Activated CD4-positive, alpha-beta memory T cell treated with anti-CD3 and anti-CD28 coated beads for 36 hours (primary cell): ENCODE measurements at regions of chr3 and their contacts with region 1.

Region 1: DNA sequence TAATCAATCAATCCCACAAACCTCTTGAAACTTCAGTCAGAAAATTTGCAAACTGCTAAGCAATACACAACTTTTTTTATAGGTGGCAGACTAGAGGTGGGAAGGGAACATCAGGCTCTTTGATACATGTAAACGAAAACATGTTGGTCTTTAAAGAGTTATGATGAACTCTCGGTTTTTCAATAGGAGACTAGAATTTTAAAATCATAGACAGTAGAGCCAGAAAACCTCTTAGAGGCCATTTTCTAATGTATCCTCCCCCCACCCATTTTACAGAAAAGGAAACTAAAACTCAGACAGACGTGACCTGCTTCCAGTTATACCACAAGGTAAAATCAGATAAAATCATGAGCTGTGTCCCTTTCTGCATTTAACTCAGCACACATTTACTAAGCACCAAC is 179.1 kb upstream of the LPP start:
- DNase-seq: no peak
- H3K4me3 Mint-ChIP-seq: peak overlapping the region; percentile 62
- H3K27ac Mint-ChIP-seq: peak overlapping the region; percentile 92
- H3K4me1 Mint-ChIP-seq: peaks cover 63% of the 10 kb centered on the region
- H3K27me3 Mint-ChIP-seq: no peaks in the 10 kb centered on the region

Region 2: DNA sequence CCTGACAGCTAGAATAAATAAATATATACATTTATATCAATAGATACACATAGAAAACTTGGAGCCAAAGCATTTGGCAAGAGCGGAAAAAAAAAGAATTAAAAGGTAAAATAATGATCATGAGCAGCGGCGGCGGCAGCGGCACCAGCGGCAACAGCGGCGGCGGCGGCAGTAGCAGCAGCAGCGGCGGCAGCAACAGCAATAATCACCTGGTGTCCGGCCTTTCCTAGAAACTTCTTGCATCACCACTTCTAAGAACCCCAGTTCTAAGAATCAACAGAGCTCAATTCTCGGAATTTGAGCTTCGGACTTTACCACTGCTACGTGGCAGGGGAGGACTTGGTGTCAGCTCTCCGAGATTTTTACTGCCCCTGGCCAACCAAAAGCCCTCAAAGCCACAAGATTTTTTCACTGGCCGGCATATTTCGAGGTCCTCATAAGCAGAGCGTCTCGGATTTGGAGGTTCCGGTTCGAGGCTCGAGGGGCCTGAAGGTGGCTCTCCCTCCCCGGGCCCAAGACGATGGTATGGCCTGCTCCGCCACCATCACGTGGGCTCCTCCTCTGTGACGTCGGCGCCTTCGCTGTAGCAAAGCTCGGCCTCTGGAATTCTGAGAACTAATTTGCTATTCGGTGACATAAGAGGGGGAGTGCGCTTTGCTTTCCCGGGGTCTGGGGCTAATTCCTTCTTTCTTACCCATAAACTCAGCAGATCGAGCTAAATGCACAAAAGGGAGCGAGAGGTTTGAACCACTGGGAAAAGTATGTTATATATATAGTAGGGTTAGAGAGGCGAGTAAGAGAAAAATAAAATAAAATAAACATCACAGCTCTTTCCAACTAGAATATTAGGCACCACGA is 229.4 kb before region 1 on chr3 and contains the start of gene BCL6:
- CTCF ChIA-PET with region 1: interaction called, 34 read pairs
- POLR2A ChIA-PET with region 1: interaction called, 47 read pairs
- intact Hi-C with region 1: loop called (anchors 1 kb)
- DNase-seq: peak; percentile 91
- H3K4me3 Mint-ChIP-seq: peak within 1 kb of the TSS; percentile 90
- H3K27ac Mint-ChIP-seq: peak within 1 kb of the TSS; percentile 99
- H3K4me1 Mint-ChIP-seq: peaks cover 47% of the 10 kb centered on the region
- H3K27me3 Mint-ChIP-seq: no peaks in the 10 kb centered on the region
- total RNA-seq, gene BCL6: 41.4 to 51.3 TPM

Region 3: GRCh38 chr3:187963677-187964385 is 11.0 kb before region 1 on chr3:
- CTCF ChIA-PET with region 1: interaction called, 5 read pairs
- POLR2A ChIA-PET with region 1: interaction called, 7 read pairs
- intact Hi-C with region 1: loop called (anchors 1 kb)
- DNase-seq: no peak
- H3K4me3 Mint-ChIP-seq: no peak overlapping the region
- H3K27ac Mint-ChIP-seq: peak overlapping the region; percentile 0
- H3K4me1 Mint-ChIP-seq: peaks cover 9% of the 10 kb centered on the region
- H3K27me3 Mint-ChIP-seq: no peaks in the 10 kb centered on the region

Region 4: GRCh38 chr3:188061133-188061532 is 86.3 kb after region 1 on chr3:
- CTCF ChIA-PET with region 1: interaction called, 3 read pairs
- POLR2A ChIA-PET with region 1: interaction called, 4 read pairs
- intact Hi-C with region 1: loop called (anchors 1 kb)
- DNase-seq: peak; percentile 81
- H3K4me3 Mint-ChIP-seq: peak overlapping the region; percentile 44
- H3K27ac Mint-ChIP-seq: peak overlapping the region; percentile 80
- H3K4me1 Mint-ChIP-seq: peaks cover 35% of the 10 kb centered on the region
- H3K27me3 Mint-ChIP-seq: no peaks in the 10 kb centered on the region

Region 5: DNA sequence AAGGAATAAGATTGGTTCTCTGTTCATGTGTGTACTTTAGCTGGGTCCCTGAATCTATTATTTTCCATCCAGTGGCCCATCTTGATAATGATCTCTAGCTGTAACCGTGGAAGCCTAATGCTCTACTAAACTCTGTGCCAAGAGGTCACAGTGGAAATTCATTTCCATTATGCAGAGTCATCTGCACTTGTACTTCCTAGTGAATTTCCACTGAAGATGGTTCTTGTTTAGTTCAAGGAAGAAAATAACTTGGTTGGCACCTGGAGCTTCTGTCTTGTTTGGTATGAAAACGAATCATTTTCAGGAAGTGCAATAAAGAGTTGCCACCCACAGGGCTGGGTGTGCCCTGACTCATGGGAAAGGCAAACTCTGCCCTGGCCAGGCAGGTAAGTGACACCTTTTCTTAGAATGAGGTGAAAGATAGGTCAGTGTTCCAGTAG is 189.4 kb after region 1 on chr3:
- CTCF ChIA-PET with region 1: interaction called, 4 read pairs
- POLR2A ChIA-PET with region 1: no interaction called
- intact Hi-C with region 1: loop called (anchors 2 kb)
- DNase-seq: peak; percentile 59
- H3K4me3 Mint-ChIP-seq: no peak overlapping the region
- H3K27ac Mint-ChIP-seq: peak overlapping the region; percentile 76
- H3K4me1 Mint-ChIP-seq: peaks cover 62% of the 10 kb centered on the region
- H3K27me3 Mint-ChIP-seq: no peaks in the 10 kb centered on the region

Region 6: GRCh38 chr3:188320757-188321156 is 345.9 kb after region 1 on chr3:
- CTCF ChIA-PET with region 1: no interaction called
- POLR2A ChIA-PET with region 1: no interaction called
- intact Hi-C with region 1: loop called (anchors 5 kb)
- DNase-seq: no peak
- H3K4me3 Mint-ChIP-seq: no peak overlapping the region
- H3K27ac Mint-ChIP-seq: no peak overlapping the region
- H3K4me1 Mint-ChIP-seq: peaks cover 58% of the 10 kb centered on the region
- H3K27me3 Mint-ChIP-seq: peaks cover 2% of the 10 kb centered on the region

Region 7: DNA sequence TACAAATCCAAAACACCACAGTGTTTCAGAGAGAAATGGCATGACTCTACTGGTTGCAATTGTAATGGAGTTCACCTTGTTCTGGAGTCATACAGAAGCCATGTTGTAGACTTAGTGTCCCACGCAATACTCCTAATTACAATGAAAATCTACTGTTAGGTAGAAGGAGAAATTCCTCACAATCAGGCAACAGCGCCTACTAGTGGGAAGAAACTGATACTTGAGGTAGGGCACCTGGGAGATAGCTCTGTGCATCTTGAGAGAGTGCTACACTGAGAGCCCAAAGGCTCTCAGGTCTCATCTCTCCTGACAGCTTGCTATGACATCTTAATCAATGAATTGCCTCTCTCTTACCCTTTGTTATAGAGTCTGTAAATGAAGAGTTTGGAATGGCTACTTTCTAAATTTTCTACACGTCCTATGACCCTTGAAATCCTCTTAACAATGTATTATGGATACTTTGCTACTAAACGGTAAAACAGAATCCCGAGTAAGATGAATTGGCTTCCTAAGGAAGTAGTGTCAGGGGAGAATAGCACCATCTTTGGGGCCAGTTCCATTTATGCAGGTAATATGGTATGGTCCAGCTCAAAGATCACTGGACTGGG is 774.2 kb after region 1 on chr3:
- CTCF ChIA-PET with region 1: no interaction called
- POLR2A ChIA-PET with region 1: no interaction called
- intact Hi-C with region 1: loop called (anchors 10 kb)
- DNase-seq: peak; percentile 56
- H3K4me3 Mint-ChIP-seq: no peak overlapping the region
- H3K27ac Mint-ChIP-seq: no peak overlapping the region
- H3K4me1 Mint-ChIP-seq: peaks cover 29% of the 10 kb centered on the region
- H3K27me3 Mint-ChIP-seq: no peaks in the 10 kb centered on the region